Ascending aorta (tissue), 2 donors: ENCODE measurements at regions of chr12 and their contacts with region 1.

Region 1: DNA sequence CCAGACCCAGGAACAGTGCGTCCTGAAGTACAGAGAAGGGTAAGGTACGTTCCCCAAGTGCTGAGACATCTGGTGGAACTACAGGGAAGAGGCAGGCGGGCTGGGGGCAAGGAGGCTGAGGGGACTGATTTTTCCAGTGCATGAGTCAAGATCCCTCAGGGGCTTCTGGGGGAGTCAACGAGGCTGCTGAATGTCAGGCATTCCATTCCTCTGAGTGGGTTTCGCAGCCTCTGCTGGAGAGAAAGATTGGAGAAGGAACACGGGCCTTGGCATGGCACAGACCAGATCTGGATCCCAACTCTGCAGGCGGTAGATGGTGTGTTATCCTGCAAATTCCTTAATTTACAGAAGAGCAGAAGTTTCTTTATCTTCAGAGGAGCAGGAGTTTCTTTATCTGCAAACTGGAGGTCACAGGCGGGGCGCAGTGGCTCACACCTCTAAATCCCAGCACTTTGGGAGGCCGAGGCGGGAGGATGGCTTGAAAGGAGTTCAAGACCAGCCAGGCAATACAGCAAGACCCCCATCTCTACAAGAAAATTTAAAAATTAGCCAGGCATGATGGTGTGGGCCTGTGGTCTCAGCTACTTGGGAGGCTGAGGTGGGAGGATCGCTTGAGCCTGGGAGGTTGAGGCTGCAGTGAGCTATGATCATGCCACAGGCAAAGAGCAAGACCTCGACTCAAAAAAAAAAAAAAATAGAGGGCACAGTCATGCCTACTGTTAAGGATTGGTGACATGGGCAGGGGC is 132.6 kb upstream of the MAP1LC3B2 start:
- DNase-seq: peak; percentile 35 to 95
- H3K4me3 ChIP-seq: no peak overlapping the region
- H3K27ac ChIP-seq: peak overlapping the region in 1 of 2 donors; percentile 48
- H3K4me1 ChIP-seq: peaks cover 0 to 11% of the 10 kb centered on the region in 2 donors
- H3K27me3 ChIP-seq: no peaks in the 10 kb centered on the region
- CTCF ChIP-seq: peak; percentile 19 to 55 (median 40)

Region 2: GRCh38 chr12:115998119-115998633 is 428.4 kb before region 1 on chr12:
- intact Hi-C with region 1: loop called (anchors 10 kb)
- DNase-seq: no peak
- H3K4me3 ChIP-seq: no peak overlapping the region
- H3K27ac ChIP-seq: peak overlapping the region in 1 of 2 donors; percentile 22
- H3K4me1 ChIP-seq: peaks cover 0 to 10% of the 10 kb centered on the region in 2 donors
- H3K27me3 ChIP-seq: no peaks in the 10 kb centered on the region
- CTCF ChIP-seq: peak; percentile 65 to 72 (median 69)

Region 3: GRCh38 chr12:116142936-116143898 is 283.3 kb before region 1 on chr12:
- intact Hi-C with region 1: loop called (anchors 5 kb)
- DNase-seq: no peak
- H3K4me3 ChIP-seq: peak overlapping the region in 1 of 2 donors; percentile 3
- H3K27ac ChIP-seq: peak overlapping the region; percentile 65
- H3K4me1 ChIP-seq: peaks cover 14 to 67% of the 10 kb centered on the region in 2 donors
- H3K27me3 ChIP-seq: no peaks in the 10 kb centered on the region
- CTCF ChIP-seq: no peak

Region 4: DNA sequence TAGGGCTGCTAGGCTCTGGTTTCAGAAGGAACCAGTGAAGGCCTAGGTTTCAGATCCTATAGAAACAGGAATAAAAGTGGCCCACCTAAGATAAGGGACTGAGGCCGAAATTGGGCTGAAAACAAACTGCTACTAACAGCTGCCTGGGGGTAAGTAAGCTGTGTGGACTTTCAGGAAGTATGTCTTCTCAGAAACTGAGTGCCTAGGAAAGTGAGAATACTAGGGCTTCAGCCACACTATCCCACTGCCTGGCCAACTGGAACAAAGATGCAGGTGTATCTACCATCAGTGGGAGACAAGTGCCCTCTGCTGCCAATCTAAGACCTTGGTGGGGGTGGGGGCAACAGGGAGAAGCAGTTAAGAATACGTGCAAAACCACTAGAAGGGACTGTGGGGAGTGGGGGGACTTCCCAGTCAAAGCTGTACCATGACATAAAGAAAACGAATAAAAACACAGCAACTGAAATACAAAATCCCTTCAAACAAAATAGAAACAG is 231.6 kb before region 1 on chr12:
- intact Hi-C with region 1: no loop called
- DNase-seq: no peak
- H3K4me3 ChIP-seq: no peak overlapping the region
- H3K27ac ChIP-seq: no peak overlapping the region
- H3K4me1 ChIP-seq: peaks cover 6 to 27% of the 10 kb centered on the region in 2 donors
- H3K27me3 ChIP-seq: no peaks in the 10 kb centered on the region
- CTCF ChIP-seq: no peak

Region 5: DNA sequence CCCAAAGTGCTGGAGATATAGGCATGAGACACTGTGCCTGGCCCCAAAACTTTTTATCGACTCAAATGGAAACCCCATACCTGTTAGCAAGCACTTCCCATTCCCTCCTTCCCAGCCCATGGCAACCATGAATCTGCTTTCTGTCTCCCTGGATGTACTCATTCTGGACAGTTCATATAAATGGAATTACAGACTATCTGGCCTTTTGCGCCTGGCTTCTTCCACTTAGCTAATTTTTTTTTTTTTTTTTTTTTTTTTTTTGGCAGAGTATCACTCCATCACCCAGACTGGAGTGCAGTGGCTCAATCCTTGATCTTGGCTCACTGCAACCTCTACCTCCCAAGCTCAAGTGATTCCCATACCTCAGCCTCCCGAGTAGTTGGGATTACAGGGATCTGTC is 14.6 kb before region 1 on chr12:
- intact Hi-C with region 1: loop called (anchors 2 kb)
- DNase-seq: no peak
- H3K4me3 ChIP-seq: no peak overlapping the region
- H3K27ac ChIP-seq: peak overlapping the region; percentile 34 to 60
- H3K4me1 ChIP-seq: peaks cover 8 to 25% of the 10 kb centered on the region in 2 donors
- H3K27me3 ChIP-seq: no peaks in the 10 kb centered on the region
- CTCF ChIP-seq: no peak

Region 6: GRCh38 chr12:116474331-116474730 is 47.8 kb after region 1 on chr12:
- intact Hi-C with region 1: no loop called
- DNase-seq: no peak
- H3K4me3 ChIP-seq: no peak overlapping the region
- H3K27ac ChIP-seq: no peak overlapping the region
- H3K4me1 ChIP-seq: no peaks in the 10 kb centered on the region
- H3K27me3 ChIP-seq: no peaks in the 10 kb centered on the region
- CTCF ChIP-seq: no peak

Region 7: GRCh38 chr12:116484807-116485206 is 58.2 kb after region 1 on chr12:
- intact Hi-C with region 1: no loop called
- DNase-seq: no peak
- H3K4me3 ChIP-seq: no peak overlapping the region
- H3K27ac ChIP-seq: no peak overlapping the region
- H3K4me1 ChIP-seq: no peaks in the 10 kb centered on the region
- H3K27me3 ChIP-seq: no peaks in the 10 kb centered on the region
- CTCF ChIP-seq: no peak